ENCODE measurements at regions of chr19 and their contacts with region 1.

Region 1: GRCh38 chr19:39906820-39907611 is 27.4 kb downstream of the FCGBP start:
- DNase-seq: no peak
- ATAC-seq: no peak
- H3K4me3 Mint-ChIP-seq: no peak overlapping the region
- H3K27ac Mint-ChIP-seq: no peak overlapping the region
- H3K4me1 Mint-ChIP-seq: peaks cover 5% of the 10 kb centered on the region
- H3K27me3 Mint-ChIP-seq: no peaks in the 10 kb centered on the region
- CTCF ChIP-seq: no peak

Region 2: GRCh38 chr19:39661565-39661964 is 245.5 kb before region 1 on chr19:
- CTCF ChIA-PET with region 1: no interaction called
- POLR2A ChIA-PET with region 1: no interaction called
- intact Hi-C with region 1: no loop called
- DNase-seq: no peak
- ATAC-seq: no peak
- H3K4me3 Mint-ChIP-seq: no peak overlapping the region
- H3K27ac Mint-ChIP-seq: no peak overlapping the region
- H3K4me1 Mint-ChIP-seq: no peaks in the 10 kb centered on the region
- H3K27me3 Mint-ChIP-seq: peaks cover 42% of the 10 kb centered on the region
- CTCF ChIP-seq: no peak

Region 3: GRCh38 chr19:39924389-39924788 is 17.4 kb after region 1 on chr19:
- CTCF ChIA-PET with region 1: no interaction called
- POLR2A ChIA-PET with region 1: no interaction called
- intact Hi-C with region 1: no loop called
- DNase-seq: no peak
- ATAC-seq: no peak
- H3K4me3 Mint-ChIP-seq: no peak overlapping the region
- H3K27ac Mint-ChIP-seq: no peak overlapping the region
- H3K4me1 Mint-ChIP-seq: no peaks in the 10 kb centered on the region
- H3K27me3 Mint-ChIP-seq: no peaks in the 10 kb centered on the region
- CTCF ChIP-seq: no peak

Region 4: GRCh38 chr19:39951686-39952085 is 44.7 kb after region 1 on chr19:
- CTCF ChIA-PET with region 1: no interaction called
- POLR2A ChIA-PET with region 1: interaction called, 4 read pairs
- intact Hi-C with region 1: loop called (anchors 5 kb)
- DNase-seq: no peak
- ATAC-seq: no peak
- H3K4me3 Mint-ChIP-seq: peak overlapping the region; percentile 66
- H3K27ac Mint-ChIP-seq: peak overlapping the region; percentile 93
- H3K4me1 Mint-ChIP-seq: peaks cover 81% of the 10 kb centered on the region
- H3K27me3 Mint-ChIP-seq: no peaks in the 10 kb centered on the region
- CTCF ChIP-seq: no peak